Right lobe of liver (tissue), 6 donors: ENCODE measurements at regions of chr2 and their contacts with region 1.

Region 1: GRCh38 chr2:203650860-203651613 is 55.4 kb upstream of the CD28 start:
- DNase-seq: peak in 1 of 3 donors; percentile 78
- ATAC-seq: peak; percentile 75 to 92 (median 80)
- H3K4me3 ChIP-seq: no peak overlapping the region
- H3K27ac ChIP-seq: peak overlapping the region; percentile 57 to 84 (median 78)
- H3K4me1 ChIP-seq: peaks cover 0 to 61% (median 28%) of the 10 kb centered on the region in 4 donors
- H3K27me3 ChIP-seq: no peaks in the 10 kb centered on the region
- CTCF ChIP-seq: peak; percentile 46 to 85 (median 60)
- POLR2A ChIP-seq: no peak

Region 2: GRCh38 chr2:203534621-203535077 is 116.4 kb before region 1 on chr2:
- intact Hi-C with region 1: loop called in 1 of 2 experiments (anchors 5 kb)
- DNase-seq: peak in 2 of 3 donors; percentile 62
- ATAC-seq: peak; percentile 20 to 46 (median 24)
- H3K4me3 ChIP-seq: peak overlapping the region; percentile 93 to 99 (median 95)
- H3K27ac ChIP-seq: peak overlapping the region; percentile 87 to 94 (median 92)
- H3K4me1 ChIP-seq: peaks cover 0 to 21% (median 7%) of the 10 kb centered on the region in 4 donors
- H3K27me3 ChIP-seq: no peaks in the 10 kb centered on the region
- CTCF ChIP-seq: peak in 1 of 4 donors; percentile 5
- POLR2A ChIP-seq: no peak